ENCODE measurements at regions of chr6 and their contacts with region 1.

Region 1: GRCh38 chr6:125415921-125416320 is 114.2 kb upstream of the HDDC2 start:
- DNase-seq: no peak
- H3K4me3 ChIP-seq: no peak overlapping the region
- H3K27ac ChIP-seq: no peak overlapping the region
- H3K4me1 ChIP-seq: no peaks in the 10 kb centered on the region
- H3K27me3 ChIP-seq: no peaks in the 10 kb centered on the region
- CTCF ChIP-seq: no peak
- EP300 ChIP-seq: no peak
- POLR2A ChIP-seq: no peak

Region 2: GRCh38 chr6:125519345-125519744 is 103.4 kb after region 1 on chr6:
- in situ Hi-C with region 1: no loop called
- intact Hi-C with region 1: loop called (anchors 1 kb)
- DNase-seq: no peak
- H3K4me3 ChIP-seq: no peak overlapping the region
- H3K27ac ChIP-seq: no peak overlapping the region
- H3K4me1 ChIP-seq: no peaks in the 10 kb centered on the region
- H3K27me3 ChIP-seq: no peaks in the 10 kb centered on the region
- CTCF ChIP-seq: no peak
- EP300 ChIP-seq: no peak
- POLR2A ChIP-seq: no peak